KBM-7 (cell line): ENCODE measurements at regions of chrX and their contacts with region 1.

Region 1: DNA sequence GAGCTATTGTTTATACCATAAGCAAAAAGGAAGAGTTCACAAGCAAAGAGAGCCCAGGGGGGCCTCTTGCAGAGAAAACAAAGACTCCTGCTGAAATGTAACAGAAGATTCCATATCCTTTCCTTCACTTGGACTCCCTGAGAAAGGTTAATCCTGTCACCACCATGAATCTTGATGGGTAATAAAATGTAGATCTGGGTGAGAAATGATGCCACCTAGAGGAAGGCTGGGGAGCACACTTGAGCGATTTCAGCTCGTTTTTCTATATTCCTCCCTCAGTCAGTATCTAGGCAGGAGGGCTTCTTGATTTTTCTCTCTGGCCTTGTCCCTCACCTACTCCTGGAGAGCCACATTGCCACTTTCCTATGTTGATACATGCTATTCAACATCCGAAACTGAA is 10.2 kb upstream of the KCNE5 start:
- DNase-seq: peak; percentile 75

Region 2: GRCh38 chrX:109393859-109394258 is 241.3 kb before region 1 on chrX:
- in situ Hi-C with region 1: no loop called
- DNase-seq: peak; percentile 28

Region 3: GRCh38 chrX:109498434-109498833 is 136.7 kb before region 1 on chrX:
- in situ Hi-C with region 1: loop called (anchors 10 kb)
- DNase-seq: no peak

Region 4: GRCh38 chrX:109536439-109537336 is 98.5 kb before region 1 on chrX and contains the start of gene NXT2:
- in situ Hi-C with region 1: no loop called
- DNase-seq: peak; percentile 97